ENCODE measurements at regions of chr20 and their contacts with region 1.

Region 1: GRCh38 chr20:20207872-20208271 is 155.5 kb downstream of the CFAP61 start:
- DNase-seq: peak; percentile 40 to 57
- ATAC-seq: peak; percentile 86 to 95 (median 93)
- H3K4me3 ChIP-seq: no peak overlapping the region
- H3K4me3 Mint-ChIP-seq: peak overlapping the region; percentile 73
- H3K27ac ChIP-seq: peak overlapping the region; percentile 75
- H3K27ac Mint-ChIP-seq: peak overlapping the region; percentile 92 to 93
- H3K4me1 ChIP-seq: peaks cover 22% of the 10 kb centered on the region
- H3K4me1 Mint-ChIP-seq: peaks cover 68 to 70% of the 10 kb centered on the region in 2 donors
- H3K27me3 ChIP-seq: no peaks in the 10 kb centered on the region
- H3K27me3 Mint-ChIP-seq: no peaks in the 10 kb centered on the region
- CTCF ChIP-seq: no peak

Region 2: DNA sequence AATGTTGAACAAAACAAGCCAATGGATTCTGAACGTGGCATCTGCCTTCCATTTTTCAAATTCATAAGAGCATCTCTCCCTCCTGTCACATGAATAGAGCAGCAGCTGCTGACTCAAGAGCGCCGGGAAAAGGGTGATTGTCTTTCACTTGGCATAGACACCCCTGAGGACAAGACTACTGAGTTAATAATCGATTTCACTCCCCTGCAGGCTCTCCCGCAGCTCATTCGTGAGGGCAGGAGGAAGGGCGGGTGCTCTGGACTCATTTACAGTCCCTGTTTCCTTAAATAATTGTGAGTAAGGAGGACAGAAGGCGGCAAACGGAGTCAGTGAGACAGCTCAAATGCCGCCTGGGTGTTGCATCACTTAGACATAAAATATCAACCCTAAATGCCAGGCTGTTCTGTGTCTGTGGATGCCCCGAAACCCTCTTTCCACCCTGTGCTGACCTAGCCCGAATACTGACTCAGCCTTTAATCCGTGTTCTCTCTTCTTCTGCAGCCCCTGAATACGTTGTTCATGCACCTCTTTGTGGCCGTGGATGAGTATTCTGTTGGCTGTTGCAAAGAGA is 134.0 kb before region 1 on chr20:
- intact Hi-C with region 1: no loop called
- DNase-seq: no peak
- ATAC-seq: no peak
- H3K4me3 ChIP-seq: no peak overlapping the region
- H3K4me3 Mint-ChIP-seq: no peak overlapping the region
- H3K27ac ChIP-seq: no peak overlapping the region
- H3K27ac Mint-ChIP-seq: no peak overlapping the region
- H3K4me1 ChIP-seq: no peaks in the 10 kb centered on the region
- H3K4me1 Mint-ChIP-seq: no peaks in the 10 kb centered on the region
- H3K27me3 ChIP-seq: no peaks in the 10 kb centered on the region
- H3K27me3 Mint-ChIP-seq: peaks cover 12 to 15% of the 10 kb centered on the region in 2 donors
- CTCF ChIP-seq: no peak

Region 3: DNA sequence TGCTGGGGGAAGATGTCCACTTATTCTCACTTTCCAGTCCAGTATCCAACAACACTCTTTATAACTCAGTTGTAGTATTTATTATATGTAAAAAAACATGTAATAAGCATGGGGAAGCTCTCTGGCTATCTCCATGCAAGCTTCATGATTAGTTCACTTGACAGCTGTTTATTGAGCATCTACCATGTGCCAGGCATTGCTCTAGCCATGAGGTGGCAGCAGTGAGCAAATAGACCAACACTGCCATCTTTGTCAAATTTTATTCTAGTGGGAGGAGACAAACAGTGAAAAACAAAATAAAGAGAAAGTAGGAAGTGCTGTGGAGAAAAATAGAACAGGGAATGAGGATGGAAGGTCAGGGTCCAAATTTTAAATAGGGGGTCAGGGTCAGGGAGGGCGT is 23.7 kb before region 1 on chr20:
- intact Hi-C with region 1: loop called (anchors 2 kb)
- DNase-seq: peak in 1 of 2 donors; percentile 13
- ATAC-seq: no peak
- H3K4me3 ChIP-seq: no peak overlapping the region
- H3K4me3 Mint-ChIP-seq: peak overlapping the region; percentile 11
- H3K27ac ChIP-seq: no peak overlapping the region
- H3K27ac Mint-ChIP-seq: peak overlapping the region; percentile 70 to 94
- H3K4me1 ChIP-seq: peaks cover 24% of the 10 kb centered on the region
- H3K4me1 Mint-ChIP-seq: peaks cover 71 to 75% of the 10 kb centered on the region in 2 donors
- H3K27me3 ChIP-seq: no peaks in the 10 kb centered on the region
- H3K27me3 Mint-ChIP-seq: no peaks in the 10 kb centered on the region
- CTCF ChIP-seq: peak; percentile 19

Region 4: GRCh38 chr20:20360464-20360863 is 152.6 kb after region 1 on chr20:
- intact Hi-C with region 1: loop called (anchors 10 kb)
- DNase-seq: peak in 1 of 2 donors; percentile 58
- ATAC-seq: peak; percentile 66 to 73 (median 68)
- H3K4me3 ChIP-seq: no peak overlapping the region
- H3K4me3 Mint-ChIP-seq: peak overlapping the region; percentile 94
- H3K27ac ChIP-seq: no peak overlapping the region
- H3K27ac Mint-ChIP-seq: peak overlapping the region; percentile 75 to 83
- H3K4me1 ChIP-seq: peaks cover 34% of the 10 kb centered on the region
- H3K4me1 Mint-ChIP-seq: peaks cover 55 to 58% of the 10 kb centered on the region in 2 donors
- H3K27me3 ChIP-seq: peaks cover 20% of the 10 kb centered on the region
- H3K27me3 Mint-ChIP-seq: peaks cover 29 to 43% of the 10 kb centered on the region in 2 donors
- CTCF ChIP-seq: peak; percentile 60

Region 5: GRCh38 chr20:20603339-20603990 is 395.6 kb after region 1 on chr20:
- intact Hi-C with region 1: loop called (anchors 10 kb)
- DNase-seq: peak; percentile 28 to 65
- ATAC-seq: peak; percentile 84 to 90 (median 88)
- H3K4me3 ChIP-seq: no peak overlapping the region
- H3K4me3 Mint-ChIP-seq: peak overlapping the region; percentile 55
- H3K27ac ChIP-seq: peak overlapping the region; percentile 29
- H3K27ac Mint-ChIP-seq: peak overlapping the region; percentile 76 to 79
- H3K4me1 ChIP-seq: peaks cover 15% of the 10 kb centered on the region
- H3K4me1 Mint-ChIP-seq: peaks cover 36 to 55% of the 10 kb centered on the region in 2 donors
- H3K27me3 ChIP-seq: no peaks in the 10 kb centered on the region
- H3K27me3 Mint-ChIP-seq: no peaks in the 10 kb centered on the region
- CTCF ChIP-seq: no peak

Region 6: DNA sequence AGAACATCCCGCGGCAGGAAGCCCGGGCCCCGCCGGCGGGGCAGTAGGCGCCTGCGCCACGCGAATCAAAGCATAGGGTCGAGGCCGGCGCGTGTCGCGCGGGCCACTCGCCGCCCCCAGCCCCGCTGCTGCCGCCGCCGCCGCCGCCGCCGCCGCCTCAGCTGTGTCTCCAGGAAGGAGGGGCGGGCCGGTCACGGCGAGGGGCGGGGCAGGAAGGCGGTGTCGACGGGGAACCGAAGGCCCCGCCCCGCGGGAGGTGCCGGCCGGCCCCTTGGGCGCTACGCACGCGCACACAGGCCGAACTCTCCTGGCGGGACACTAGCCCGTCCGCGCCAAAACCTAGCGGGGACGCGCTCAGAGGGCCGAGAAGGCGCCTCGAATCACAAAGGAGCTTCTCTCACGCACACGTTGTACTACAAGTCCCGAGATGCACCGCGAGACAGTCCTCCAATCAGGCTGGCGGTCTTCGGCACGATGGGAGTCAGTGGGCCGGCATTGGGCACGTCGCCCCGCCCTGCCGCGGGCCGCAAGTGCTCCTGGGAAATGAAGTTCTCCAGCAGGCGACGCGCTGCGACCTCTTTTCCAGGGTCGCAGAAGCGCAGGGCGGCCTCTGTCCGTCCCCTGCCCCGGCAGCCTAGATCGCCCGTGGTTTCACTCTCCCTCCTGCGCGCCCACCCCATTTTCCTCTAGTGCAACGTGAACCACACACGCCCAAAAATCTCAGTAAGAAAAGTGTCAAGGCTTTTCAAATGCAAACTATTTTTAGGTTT is 504.8 kb after region 1 on chr20 and contains the start of gene RALGAPA2:
- intact Hi-C with region 1: loop called (anchors 10 kb)
- DNase-seq: peak; percentile 93 to 96
- ATAC-seq: peak; percentile 92 to 98 (median 94)
- H3K4me3 ChIP-seq: peak within 1 kb of the TSS; percentile 57
- H3K4me3 Mint-ChIP-seq: peak within 1 kb of the TSS; percentile 93
- H3K27ac ChIP-seq: peak within 1 kb of the TSS; percentile 87
- H3K27ac Mint-ChIP-seq: peak within 1 kb of the TSS; percentile 89 to 94
- H3K4me1 ChIP-seq: peaks cover 17% of the 10 kb centered on the region
- H3K4me1 Mint-ChIP-seq: peaks cover 32 to 34% of the 10 kb centered on the region in 2 donors
- H3K27me3 ChIP-seq: no peaks in the 10 kb centered on the region
- H3K27me3 Mint-ChIP-seq: no peaks in the 10 kb centered on the region
- CTCF ChIP-seq: no peak
- total RNA-seq, gene RALGAPA2: 26.6 to 33.9 (median 33.1) TPM

Measured in natural killer cell (primary cell).